Thyroid gland (tissue), 4 donors: ENCODE measurements at regions of chr1 and their contacts with region 1.

Region 1: DNA sequence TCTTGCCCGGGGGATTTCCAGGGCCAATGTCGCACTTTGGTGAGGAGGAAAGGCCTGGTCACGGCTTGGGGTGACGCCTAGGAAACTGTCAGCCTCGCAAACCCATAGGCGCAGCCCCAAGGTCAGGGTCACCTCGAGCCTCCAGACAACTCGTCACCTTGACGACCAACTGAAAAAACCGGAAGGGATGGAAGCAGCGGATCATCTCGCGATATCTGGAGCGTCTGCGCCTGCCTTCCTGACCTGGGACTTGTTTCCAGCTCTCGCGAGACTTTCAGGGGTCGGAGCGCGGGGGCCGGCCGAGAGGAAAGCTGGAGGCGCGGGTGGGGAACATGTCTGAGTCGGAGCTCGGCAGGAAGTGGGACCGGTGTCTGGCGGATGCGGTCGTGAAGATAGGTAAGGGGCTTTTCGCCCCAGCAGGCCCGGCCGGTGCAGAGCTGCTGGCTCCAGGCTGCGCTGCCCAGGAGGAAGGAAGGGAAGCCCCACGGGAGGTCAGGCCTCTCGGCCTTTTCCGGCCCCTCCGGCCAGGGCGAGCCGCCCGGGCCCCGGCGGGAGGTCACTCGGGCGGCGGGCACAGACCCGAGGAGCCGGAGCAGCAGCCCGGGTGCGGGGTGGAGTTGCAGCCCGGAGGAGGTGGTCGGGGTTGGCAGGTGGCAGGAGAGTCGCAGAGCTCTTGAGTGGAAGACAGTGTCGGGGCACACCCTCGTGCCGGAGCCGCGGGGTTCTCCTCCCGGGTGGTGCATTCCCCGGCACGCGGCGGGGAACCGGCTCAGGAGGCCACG is 47.2 kb upstream of the NBL1 start:
- DNase-seq: peak; percentile 98
- H3K4me3 ChIP-seq: peak overlapping the region; percentile 34 to 84 (median 34)
- H3K27ac ChIP-seq: peak overlapping the region; percentile 85 to 91 (median 91)
- H3K4me1 ChIP-seq: peaks cover 21 to 28% of the 10 kb centered on the region in 2 donors
- H3K27me3 ChIP-seq: no peaks in the 10 kb centered on the region
- CTCF ChIP-seq: no peak
- POLR2A ChIP-seq: peak; percentile 5 to 84

Region 2: GRCh38 chr1:19390901-19391595 is 205.9 kb before region 1 on chr1:
- intact Hi-C with region 1: loop called (anchors 5 kb)
- DNase-seq: peak; percentile 79 to 85
- H3K4me3 ChIP-seq: no peak overlapping the region
- H3K27ac ChIP-seq: peak overlapping the region; percentile 56 to 74 (median 69)
- H3K4me1 ChIP-seq: peaks cover 44 to 56% of the 10 kb centered on the region in 2 donors
- H3K27me3 ChIP-seq: no peaks in the 10 kb centered on the region
- CTCF ChIP-seq: peak; percentile 78 to 90 (median 86)
- POLR2A ChIP-seq: no peak

Region 3: GRCh38 chr1:19445417-19446342 is 151.2 kb before region 1 on chr1:
- intact Hi-C with region 1: no loop called
- DNase-seq: peak; percentile 77 to 83
- H3K4me3 ChIP-seq: no peak overlapping the region
- H3K27ac ChIP-seq: peak overlapping the region; percentile 72 to 87 (median 79)
- H3K4me1 ChIP-seq: peaks cover 65 to 92% of the 10 kb centered on the region in 2 donors
- H3K27me3 ChIP-seq: no peaks in the 10 kb centered on the region
- CTCF ChIP-seq: peak in 5 of 6 experiments; percentile 20 to 34 (median 28)
- POLR2A ChIP-seq: no peak

Region 4: DNA sequence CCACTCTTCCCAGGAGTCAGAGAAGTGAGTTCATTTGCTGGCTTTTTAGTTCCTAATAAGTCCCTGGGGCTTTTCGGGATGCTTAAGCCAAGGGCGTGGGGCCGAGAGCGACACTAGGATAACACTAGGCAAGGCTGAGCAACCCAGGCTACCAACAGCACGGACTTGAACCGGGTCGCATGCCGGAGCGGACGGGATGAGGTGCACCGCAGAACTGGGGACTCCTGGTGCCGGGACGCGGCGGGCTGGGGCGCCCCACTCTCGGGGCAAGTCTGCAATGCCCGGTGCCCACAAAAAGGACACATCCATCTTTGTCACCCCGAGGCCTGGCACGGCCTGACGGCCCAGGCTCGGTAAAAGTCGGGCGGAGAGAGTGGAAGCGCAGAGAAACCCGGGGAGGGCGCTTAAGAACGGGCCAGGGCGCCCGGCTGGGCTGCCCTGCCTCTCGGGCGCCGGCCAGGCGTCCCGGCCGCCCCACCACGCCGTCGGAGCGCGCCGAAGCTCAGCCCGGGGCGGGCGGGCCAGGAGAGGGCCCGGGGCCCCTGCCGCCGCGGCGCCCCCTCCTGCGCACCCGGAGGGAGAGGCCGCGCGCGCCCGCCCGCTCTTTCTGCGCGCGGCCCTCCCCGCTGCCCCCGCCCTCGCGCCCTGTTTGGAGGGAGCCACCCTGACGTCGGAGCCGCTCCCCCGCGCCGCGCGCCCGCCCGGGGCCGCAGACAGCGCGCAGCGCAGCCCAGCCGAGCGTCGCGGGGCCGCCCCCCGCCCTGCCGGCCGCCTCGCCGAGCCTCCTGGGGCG is 46.9 kb after region 1 on chr1 and contains the start of gene NBL1:
- intact Hi-C with region 1: loop called (anchors 10 kb)
- DNase-seq: peak; percentile 63 to 69
- H3K4me3 ChIP-seq: peak within 1 kb of the TSS in 2 of 3 donors; percentile 42 to 58
- H3K27ac ChIP-seq: peak within 1 kb of the TSS; percentile 62 to 82 (median 77)
- H3K4me1 ChIP-seq: peaks cover 0 to 38% of the 10 kb centered on the region in 2 donors
- H3K27me3 ChIP-seq: no peaks in the 10 kb centered on the region
- CTCF ChIP-seq: no peak
- POLR2A ChIP-seq: peak in 1 of 2 donors; percentile 53
- total RNA-seq, gene NBL1: 29.4 to 70.4 (median 43.6) TPM

Region 5: GRCh38 chr1:19828546-19828945 is 231.6 kb after region 1 on chr1:
- intact Hi-C with region 1: no loop called
- DNase-seq: no peak
- H3K4me3 ChIP-seq: no peak overlapping the region
- H3K27ac ChIP-seq: no peak overlapping the region
- H3K4me1 ChIP-seq: peaks cover 0 to 4% of the 10 kb centered on the region in 2 donors
- H3K27me3 ChIP-seq: no peaks in the 10 kb centered on the region
- CTCF ChIP-seq: no peak
- POLR2A ChIP-seq: no peak